Mammary epithelial cell (primary cell): ENCODE measurements at regions of chrX and their contacts with region 1.

Region 1: DNA sequence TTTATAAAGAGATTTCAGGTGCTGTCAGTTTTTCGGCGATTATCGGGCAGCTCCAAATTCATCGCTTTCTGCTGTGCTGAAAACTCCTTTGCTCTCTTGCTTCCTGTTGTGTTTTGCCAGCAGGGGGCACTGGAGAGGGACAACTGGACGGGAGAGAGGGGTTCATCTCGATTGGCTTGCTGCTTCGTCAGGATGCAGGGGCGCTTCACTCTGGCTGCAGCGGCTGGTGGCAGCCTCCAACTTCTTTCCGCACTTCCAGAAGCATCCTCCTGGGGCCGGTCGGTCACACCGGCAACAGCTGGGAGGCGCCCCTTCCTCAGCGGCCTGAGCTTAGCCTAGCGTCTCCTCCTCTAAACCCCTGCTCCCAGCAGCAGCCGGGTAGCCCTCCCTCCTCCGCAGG is 29.5 kb downstream of the MSL3 start:
- DNase-seq: no peak
- H3K4me3 ChIP-seq: no peak overlapping the region
- H3K27ac ChIP-seq: no peak overlapping the region
- H3K4me1 ChIP-seq: no peaks in the 10 kb centered on the region
- H3K27me3 ChIP-seq: no peaks in the 10 kb centered on the region
- CTCF ChIP-seq: peak; percentile 24 to 42

Region 2: DNA sequence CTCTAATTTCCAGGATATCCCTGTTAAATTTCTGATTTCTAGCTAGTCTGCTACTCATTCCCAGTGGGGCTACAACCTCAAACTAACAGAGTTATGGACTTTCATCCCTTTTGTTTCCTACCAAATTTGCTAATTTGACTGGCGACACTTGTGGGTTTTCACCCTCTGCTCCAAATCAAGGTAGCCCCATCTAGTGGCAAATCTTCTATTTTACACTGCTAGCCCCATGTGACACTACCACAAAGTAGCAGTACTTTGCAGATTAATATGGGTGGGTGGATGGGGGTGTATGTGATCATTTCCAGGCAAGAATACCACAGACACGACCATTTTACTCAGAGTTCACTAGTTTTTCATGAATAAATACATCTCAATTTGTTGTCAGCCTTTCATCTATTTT is 120.8 kb after region 1 on chrX:
- CTCF ChIA-PET with region 1: no interaction called
- dilution Hi-C with region 1: no loop called
- in situ Hi-C with region 1: no loop called
- intact Hi-C with region 1: loop called (anchors 1 kb)
- DNase-seq: peak; percentile 25
- H3K4me3 ChIP-seq: no peak overlapping the region
- H3K27ac ChIP-seq: no peak overlapping the region
- H3K4me1 ChIP-seq: no peaks in the 10 kb centered on the region
- H3K27me3 ChIP-seq: no peaks in the 10 kb centered on the region
- CTCF ChIP-seq: peak; percentile 63 to 64